ENCODE measurements at regions of chr12 and their contacts with region 1.

Region 1: GRCh38 chr12:48851883-48852733 is at the start of gene DDX23:
- DNase-seq: peak; percentile 96
- ATAC-seq: peak; percentile 97
- H3K4me3 Mint-ChIP-seq: peak within 1 kb of the TSS; percentile 96
- H3K27ac Mint-ChIP-seq: peak within 1 kb of the TSS; percentile 99
- H3K4me1 Mint-ChIP-seq: peaks cover 30% of the 10 kb centered on the region
- H3K27me3 Mint-ChIP-seq: no peaks in the 10 kb centered on the region
- total RNA-seq, gene DDX23: 115 to 120 TPM

Region 2: DNA sequence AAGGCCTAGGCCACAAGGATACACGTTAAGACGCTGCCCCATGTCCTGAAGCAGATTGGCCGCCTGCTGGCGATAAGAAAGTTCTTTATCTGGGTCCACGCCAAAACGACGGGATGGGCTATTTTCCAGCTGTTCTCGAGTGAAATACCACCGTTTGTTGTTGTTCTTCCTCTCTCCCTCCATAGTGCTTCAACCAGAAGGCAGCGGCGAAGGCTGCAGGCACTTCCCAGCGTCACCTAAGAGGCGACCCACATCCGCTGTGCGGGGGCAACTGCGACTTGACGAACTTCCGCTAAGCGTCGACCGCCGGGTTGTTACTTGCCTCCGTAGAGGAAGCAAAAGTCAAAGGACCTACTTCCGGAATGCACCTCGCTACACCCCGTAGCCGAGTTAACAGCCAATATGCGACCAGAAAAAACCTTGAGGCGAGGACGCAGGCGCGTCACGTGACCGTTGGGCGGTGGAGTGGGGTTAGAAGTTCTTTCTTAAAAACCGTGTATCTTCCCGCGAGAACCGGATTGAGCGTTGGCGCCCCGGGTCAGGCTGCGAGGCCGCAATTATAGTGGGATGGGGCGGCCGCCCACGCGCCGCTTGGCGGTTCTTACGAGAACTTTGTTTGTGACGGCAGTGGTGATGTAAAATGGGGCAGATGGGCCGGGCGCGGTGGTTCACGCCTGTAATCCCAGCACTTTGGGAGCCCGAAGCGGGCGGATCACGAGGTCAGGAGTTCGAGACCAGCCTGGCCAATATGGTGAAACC is 135.4 kb before region 1 on chr12 and contains the start of gene CCNT1:
- CTCF ChIA-PET with region 1: no interaction called
- POLR2A ChIA-PET with region 1: no interaction called
- intact Hi-C with region 1: loop called (anchors 1 to 2 kb)
- DNase-seq: peak; percentile 100
- ATAC-seq: peak; percentile 95
- H3K4me3 Mint-ChIP-seq: peak within 1 kb of the TSS; percentile 99
- H3K27ac Mint-ChIP-seq: peak within 1 kb of the TSS; percentile 99
- H3K4me1 Mint-ChIP-seq: peaks cover 37% of the 10 kb centered on the region
- H3K27me3 Mint-ChIP-seq: no peaks in the 10 kb centered on the region
- total RNA-seq, gene CCNT1: 82.2 to 85.1 TPM

Region 3: GRCh38 chr12:48865434-48866290 is 13.6 kb after region 1 on chr12 and contains the start of gene RND1:
- CTCF ChIA-PET with region 1: interaction called, 50 read pairs
- POLR2A ChIA-PET with region 1: interaction called, 14 read pairs
- intact Hi-C with region 1: loop called (anchors 1 to 2 kb)
- DNase-seq: peak; percentile 89
- ATAC-seq: peak; percentile 95
- H3K4me3 Mint-ChIP-seq: peak within 1 kb of the TSS; percentile 74
- H3K27ac Mint-ChIP-seq: peak within 1 kb of the TSS; percentile 85
- H3K4me1 Mint-ChIP-seq: peaks cover 24% of the 10 kb centered on the region
- H3K27me3 Mint-ChIP-seq: peaks cover 33% of the 10 kb centered on the region
- total RNA-seq, gene RND1: 2.2 to 3.3 TPM

Region 4: GRCh38 chr12:48903982-48904411 is 51.9 kb after region 1 on chr12:
- CTCF ChIA-PET with region 1: interaction called, 38 read pairs
- POLR2A ChIA-PET with region 1: interaction called, 5 read pairs
- intact Hi-C with region 1: loop called in 1 of 2 experiments (anchors 1 kb)
- DNase-seq: peak; percentile 92
- ATAC-seq: peak; percentile 94
- H3K4me3 Mint-ChIP-seq: peak overlapping the region; percentile 63
- H3K27ac Mint-ChIP-seq: no peak overlapping the region
- H3K4me1 Mint-ChIP-seq: peaks cover 5% of the 10 kb centered on the region
- H3K27me3 Mint-ChIP-seq: peaks cover 3% of the 10 kb centered on the region

Region 5: GRCh38 chr12:48957141-48958048 is 105.3 kb after region 1 on chr12 and contains the start of gene ARF3:
- CTCF ChIA-PET with region 1: interaction called, 13 read pairs
- POLR2A ChIA-PET with region 1: interaction called, 3 read pairs
- intact Hi-C with region 1: loop called in 1 of 2 experiments (anchors 1 kb)
- DNase-seq: peak; percentile 97
- ATAC-seq: peak; percentile 99
- H3K4me3 Mint-ChIP-seq: peak within 1 kb of the TSS; percentile 92
- H3K27ac Mint-ChIP-seq: peak within 1 kb of the TSS; percentile 74
- H3K4me1 Mint-ChIP-seq: peaks cover 23% of the 10 kb centered on the region
- H3K27me3 Mint-ChIP-seq: no peaks in the 10 kb centered on the region
- total RNA-seq, gene ARF3: 84.7 to 96.1 TPM

Region 6: DNA sequence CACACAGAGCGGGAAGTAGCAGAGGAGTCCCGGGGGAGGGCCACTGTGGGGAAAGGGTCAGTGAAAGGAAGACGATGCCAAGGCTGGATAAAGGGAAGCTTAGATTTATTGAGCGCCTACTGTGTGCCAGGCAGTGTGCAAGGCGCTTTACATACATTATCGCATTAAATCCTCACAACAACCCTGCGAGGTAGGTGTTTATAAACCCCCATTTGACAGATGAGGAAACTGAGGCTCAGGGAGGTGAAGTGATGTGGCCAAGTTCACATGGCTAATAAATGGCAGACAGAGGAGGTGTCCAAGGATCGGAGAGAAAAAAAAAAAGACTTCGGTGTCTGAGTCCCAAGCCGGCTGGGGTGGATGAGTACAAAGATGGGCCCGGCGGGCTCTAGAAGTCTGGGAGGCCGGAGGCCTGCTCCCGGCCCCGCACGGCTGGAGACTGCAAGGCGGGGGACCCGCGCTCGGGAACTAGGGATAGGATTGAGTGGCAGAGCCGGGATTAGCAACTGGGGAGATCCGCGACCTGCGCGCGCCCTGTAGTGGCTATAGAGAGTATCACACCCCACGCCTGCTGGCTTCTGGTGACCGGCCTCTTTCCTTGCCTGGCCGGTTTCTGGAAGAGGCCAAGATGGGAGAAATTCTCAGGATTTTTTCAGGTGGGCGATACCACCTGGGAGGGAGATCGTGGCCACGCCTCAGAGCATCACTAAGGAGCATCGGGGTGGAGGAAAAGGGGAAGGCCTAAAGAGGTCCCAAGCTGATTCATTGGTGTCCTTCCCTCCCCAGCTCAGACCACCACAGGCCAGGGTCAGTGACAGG is 143.2 kb after region 1 on chr12:
- CTCF ChIA-PET with region 1: interaction called, 15 read pairs
- POLR2A ChIA-PET with region 1: interaction called, 4 read pairs
- intact Hi-C with region 1: loop called (anchors 1 to 5 kb)
- DNase-seq: peak; percentile 77
- ATAC-seq: peak; percentile 13
- H3K4me3 Mint-ChIP-seq: no peak overlapping the region
- H3K27ac Mint-ChIP-seq: no peak overlapping the region
- H3K4me1 Mint-ChIP-seq: peaks cover 26% of the 10 kb centered on the region
- H3K27me3 Mint-ChIP-seq: peaks cover 52% of the 10 kb centered on the region

Region 7: DNA sequence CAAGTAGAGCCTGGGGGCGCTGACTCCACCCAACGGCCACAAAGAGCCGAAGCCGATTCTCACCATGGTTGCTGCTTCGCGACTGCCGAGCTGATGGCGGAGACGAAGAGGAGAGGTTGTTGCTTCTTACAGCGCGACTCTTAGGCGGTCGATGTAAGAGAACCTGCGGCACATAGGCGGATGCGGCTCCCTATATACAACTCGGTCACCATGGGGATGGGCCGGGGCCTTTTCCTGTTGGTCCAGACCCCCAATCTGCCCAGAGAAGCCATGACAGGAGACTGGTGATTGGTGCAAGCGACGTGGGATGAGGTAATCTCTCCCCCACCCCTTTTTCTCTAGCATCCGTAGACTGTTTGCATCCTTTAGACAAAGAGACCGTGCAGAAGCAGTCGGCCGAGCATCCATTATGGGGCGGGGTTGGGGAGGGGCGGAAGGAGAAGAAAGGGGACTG is 336.8 kb after region 1 on chr12 and contains the start of gene TUBA1A:
- CTCF ChIA-PET with region 1: no interaction called
- POLR2A ChIA-PET with region 1: no interaction called
- intact Hi-C with region 1: loop called in 1 of 2 experiments (anchors 1 kb)
- DNase-seq: peak; percentile 97
- ATAC-seq: peak; percentile 95
- H3K4me3 Mint-ChIP-seq: peak within 1 kb of the TSS; percentile 92
- H3K27ac Mint-ChIP-seq: peak within 1 kb of the TSS; percentile 92
- H3K4me1 Mint-ChIP-seq: peaks cover 24% of the 10 kb centered on the region
- H3K27me3 Mint-ChIP-seq: no peaks in the 10 kb centered on the region
- total RNA-seq, gene TUBA1A: 75.7 to 98.5 TPM

Measured in activated CD4-positive, alpha-beta T cell treated with anti-CD3 and anti-CD28 coated beads for 36 hours (primary cell).